AG04449 (cell line): ENCODE measurements at regions of chr1 and their contacts with region 1.

Region 1: DNA sequence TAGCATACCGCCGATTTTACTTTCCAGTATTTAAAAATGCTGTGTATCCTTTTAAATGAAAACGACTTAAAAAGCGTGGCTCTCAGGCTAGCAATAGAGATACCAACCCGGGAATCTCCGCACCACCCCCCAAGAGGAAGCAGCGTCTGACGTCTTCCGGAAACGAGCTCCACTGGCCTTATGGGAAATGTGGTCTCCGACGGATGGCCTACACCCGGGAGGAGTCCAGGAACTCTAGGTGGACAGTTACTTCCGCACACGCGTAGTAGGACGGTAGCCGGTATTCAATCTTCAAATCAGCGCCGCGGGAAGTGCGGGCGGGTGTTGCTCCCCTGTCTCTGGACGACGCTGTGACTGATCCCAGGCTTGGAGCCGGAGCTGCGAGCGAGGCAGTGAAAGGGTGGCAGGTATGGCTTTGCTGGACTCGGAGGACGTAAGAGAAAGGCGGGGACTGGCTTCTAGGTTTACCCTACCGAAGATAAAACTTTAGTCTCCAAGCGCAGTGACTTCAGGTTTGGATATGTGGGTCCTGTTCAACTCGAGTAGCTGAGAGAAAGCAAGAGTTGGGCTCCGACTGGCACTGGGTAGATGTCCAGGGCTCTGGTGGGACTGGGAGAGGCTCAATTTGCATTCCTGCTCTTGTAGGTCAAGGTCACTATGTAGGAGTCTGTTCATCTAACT is at the start of gene ZNF684:
- DNase-seq: peak; percentile 74
- H3K4me3 ChIP-seq: peak within 1 kb of the TSS; percentile 90
- CTCF ChIP-seq: no peak

Region 2: DNA sequence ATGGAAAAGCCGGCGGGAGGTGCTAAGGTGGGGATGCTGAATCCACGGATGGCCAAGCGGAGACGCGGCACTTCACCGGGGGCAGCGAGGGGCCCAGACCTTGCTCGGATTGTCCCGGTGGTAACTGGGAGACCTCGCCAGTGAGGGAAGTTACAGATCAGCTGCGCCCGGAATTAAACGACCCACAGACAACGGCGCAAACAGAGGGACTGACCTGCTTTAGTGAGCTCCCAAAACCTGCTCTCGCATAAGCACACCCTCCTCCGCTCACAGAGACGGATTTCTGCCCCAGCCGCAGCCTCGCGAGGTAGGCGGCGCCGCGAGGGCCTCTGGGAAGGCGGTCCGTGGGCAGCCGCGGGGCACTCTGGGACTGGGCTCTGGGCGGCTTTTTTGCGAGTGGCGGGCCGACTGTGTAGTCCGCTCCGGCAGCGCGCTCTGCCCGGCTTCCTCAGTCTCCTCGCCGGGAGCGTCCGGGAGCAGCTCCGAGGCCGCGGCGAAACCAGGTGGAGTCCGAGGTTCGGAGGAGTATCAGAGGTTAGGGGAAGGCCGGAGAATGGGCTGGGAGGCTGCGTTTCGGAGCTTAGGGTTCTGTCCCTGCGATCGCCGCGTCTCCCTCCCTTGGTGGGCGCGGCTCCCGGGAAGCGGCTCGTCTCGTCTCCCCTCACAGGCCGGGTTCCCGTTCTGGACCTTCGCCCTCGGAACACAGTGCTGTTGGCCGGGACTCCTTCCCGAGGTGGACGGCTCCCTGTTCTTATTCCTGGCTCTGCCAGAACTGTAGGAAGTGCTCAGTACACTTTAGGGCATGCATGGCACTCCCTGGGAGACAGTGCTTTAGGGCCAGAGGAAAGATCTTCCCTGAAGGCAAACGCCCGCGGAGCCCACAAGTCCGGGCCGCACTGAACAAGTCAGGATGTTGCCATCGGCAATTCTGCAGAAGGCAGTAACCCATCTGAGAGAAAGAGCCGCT is 22.9 kb before region 1 on chr1 and contains the start of gene EXO5:
- CTCF ChIA-PET with region 1: interaction called, 20 read pairs
- POLR2A ChIA-PET with region 1: interaction called, 4 read pairs
- DNase-seq: no peak
- H3K4me3 ChIP-seq: peak within 1 kb of the TSS; percentile 81
- CTCF ChIP-seq: no peak

Region 3: GRCh38 chr1:40553017-40553416 is 21.5 kb after region 1 on chr1:
- CTCF ChIA-PET with region 1: interaction called, 13 read pairs
- POLR2A ChIA-PET with region 1: no interaction called
- DNase-seq: no peak
- H3K4me3 ChIP-seq: no peak overlapping the region
- CTCF ChIP-seq: no peak

Region 4: DNA sequence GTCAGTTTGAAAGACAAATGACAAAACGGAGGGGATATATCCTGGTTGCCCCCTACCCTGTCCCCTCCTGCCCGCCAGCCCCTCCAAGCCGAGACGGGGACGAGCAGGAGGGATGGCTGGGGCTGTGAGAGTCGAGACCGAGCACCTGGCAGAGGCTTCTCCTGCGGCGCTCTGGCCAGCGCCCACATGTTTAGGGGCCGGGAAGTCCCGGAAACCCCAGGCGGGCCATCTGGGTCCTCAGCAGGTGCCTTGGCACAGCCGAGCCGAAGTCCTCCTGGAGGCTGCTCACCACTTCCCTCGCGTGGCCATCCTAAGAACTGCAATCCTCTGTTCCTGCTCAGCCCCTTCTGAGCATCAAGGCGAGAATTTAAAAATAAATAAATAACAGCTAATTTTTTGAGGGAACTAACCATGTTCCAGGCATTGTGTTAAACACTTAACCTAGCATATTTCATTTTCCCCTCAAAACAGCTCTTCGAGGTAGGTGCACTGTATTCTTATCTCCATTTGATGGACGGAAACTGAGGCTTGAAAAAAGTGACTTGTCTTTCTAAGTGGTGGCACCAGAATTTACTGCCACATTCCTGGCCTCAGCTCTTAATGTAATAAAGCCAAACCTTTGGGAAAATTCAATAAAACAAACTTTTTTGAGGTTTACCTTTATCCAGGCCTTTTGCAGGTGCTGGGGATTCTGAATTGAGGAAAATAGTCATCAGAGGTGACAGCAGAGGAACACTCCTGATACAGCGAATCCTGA is 137.4 kb after region 1 on chr1:
- CTCF ChIA-PET with region 1: interaction called, 15 read pairs
- POLR2A ChIA-PET with region 1: no interaction called
- DNase-seq: no peak
- H3K4me3 ChIP-seq: no peak overlapping the region
- CTCF ChIP-seq: peak; percentile 86